Activated T-helper 2 cell treated with anti-CD3 and anti-CD28 coated beads, Interferon-gamma antibody, Interleukin-2, Interleukin-4, amounts not matched to agents 10 μg/mL and 5 μg/mL and 100 μg/mL, durations not matched to agents 14 hours and 24 hours and 36 hours (primary cell): ENCODE measurements at regions of chr1 and their contacts with region 1.

Region 1: GRCh38 chr1:101520302-101520701 is 283.5 kb downstream of the S1PR1 start:
- DNase-seq: no peak
- H3K4me3 Mint-ChIP-seq: no peak overlapping the region
- H3K27ac Mint-ChIP-seq: no peak overlapping the region
- H3K4me1 Mint-ChIP-seq: peaks cover 3% of the 10 kb centered on the region
- H3K27me3 Mint-ChIP-seq: peaks cover 19% of the 10 kb centered on the region

Region 2: DNA sequence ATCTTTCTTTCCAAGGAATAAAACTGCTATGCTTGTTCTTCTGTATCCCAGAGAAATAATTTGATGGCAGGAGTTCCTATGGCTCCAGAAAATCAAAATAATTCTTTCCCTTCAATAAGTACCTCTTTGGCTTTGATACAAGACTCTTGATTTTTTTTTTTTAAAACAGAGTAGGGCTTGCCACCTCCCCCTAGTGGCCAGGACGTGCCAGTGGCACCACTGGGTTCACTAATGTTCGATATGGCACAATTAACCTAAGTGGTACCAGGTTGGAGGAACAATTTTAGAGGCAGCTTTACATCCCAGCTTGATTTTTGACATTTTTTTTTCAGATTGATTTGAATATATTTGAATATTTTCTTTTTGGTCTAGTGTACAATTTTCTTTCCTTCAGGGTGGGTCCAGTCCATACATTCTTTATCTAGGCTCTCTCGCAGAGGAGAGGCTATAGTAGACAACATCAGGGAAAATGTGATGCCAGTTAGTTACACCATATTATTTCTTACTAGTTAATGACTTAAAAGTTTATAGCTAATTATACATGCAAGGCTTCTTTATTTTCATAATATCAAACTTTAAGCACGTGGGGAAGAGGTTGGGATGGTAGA is 47.4 kb after region 1 on chr1:
- intact Hi-C with region 1: loop called (anchors 1 kb)
- DNase-seq: peak; percentile 21
- H3K4me3 Mint-ChIP-seq: no peak overlapping the region
- H3K27ac Mint-ChIP-seq: no peak overlapping the region
- H3K4me1 Mint-ChIP-seq: no peaks in the 10 kb centered on the region
- H3K27me3 Mint-ChIP-seq: peaks cover 14% of the 10 kb centered on the region

Region 3: DNA sequence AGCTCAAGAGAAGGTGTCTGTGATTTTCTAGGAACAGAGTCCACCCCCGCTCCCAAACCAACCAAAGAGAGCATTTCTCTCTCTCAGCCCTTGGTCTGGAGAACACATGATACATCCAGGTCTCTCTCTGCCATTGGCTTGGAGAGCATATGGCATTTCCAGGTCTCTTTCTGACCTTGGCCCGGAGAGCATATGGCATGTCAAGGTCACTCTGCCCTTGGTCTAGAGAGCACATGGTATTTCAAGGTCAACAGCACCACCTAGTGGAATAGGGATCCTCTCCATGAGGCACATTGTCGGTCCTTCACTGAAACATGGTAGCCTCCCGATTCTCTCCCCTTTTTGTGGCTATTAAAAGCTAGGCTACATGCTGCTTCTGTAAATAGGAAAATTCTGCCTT is 914.1 kb after region 1 on chr1:
- intact Hi-C with region 1: loop called (anchors 5 kb)
- DNase-seq: no peak
- H3K4me3 Mint-ChIP-seq: no peak overlapping the region
- H3K27ac Mint-ChIP-seq: no peak overlapping the region
- H3K4me1 Mint-ChIP-seq: no peaks in the 10 kb centered on the region
- H3K27me3 Mint-ChIP-seq: no peaks in the 10 kb centered on the region

Region 4: GRCh38 chr1:102970498-102971078 is 1450.3 kb after region 1 on chr1:
- intact Hi-C with region 1: loop called (anchors 5 kb)
- DNase-seq: no peak
- H3K4me3 Mint-ChIP-seq: no peak overlapping the region
- H3K27ac Mint-ChIP-seq: no peak overlapping the region
- H3K4me1 Mint-ChIP-seq: no peaks in the 10 kb centered on the region
- H3K27me3 Mint-ChIP-seq: no peaks in the 10 kb centered on the region